ENCODE measurements at regions of chr16 and their contacts with region 1.

Region 1: DNA sequence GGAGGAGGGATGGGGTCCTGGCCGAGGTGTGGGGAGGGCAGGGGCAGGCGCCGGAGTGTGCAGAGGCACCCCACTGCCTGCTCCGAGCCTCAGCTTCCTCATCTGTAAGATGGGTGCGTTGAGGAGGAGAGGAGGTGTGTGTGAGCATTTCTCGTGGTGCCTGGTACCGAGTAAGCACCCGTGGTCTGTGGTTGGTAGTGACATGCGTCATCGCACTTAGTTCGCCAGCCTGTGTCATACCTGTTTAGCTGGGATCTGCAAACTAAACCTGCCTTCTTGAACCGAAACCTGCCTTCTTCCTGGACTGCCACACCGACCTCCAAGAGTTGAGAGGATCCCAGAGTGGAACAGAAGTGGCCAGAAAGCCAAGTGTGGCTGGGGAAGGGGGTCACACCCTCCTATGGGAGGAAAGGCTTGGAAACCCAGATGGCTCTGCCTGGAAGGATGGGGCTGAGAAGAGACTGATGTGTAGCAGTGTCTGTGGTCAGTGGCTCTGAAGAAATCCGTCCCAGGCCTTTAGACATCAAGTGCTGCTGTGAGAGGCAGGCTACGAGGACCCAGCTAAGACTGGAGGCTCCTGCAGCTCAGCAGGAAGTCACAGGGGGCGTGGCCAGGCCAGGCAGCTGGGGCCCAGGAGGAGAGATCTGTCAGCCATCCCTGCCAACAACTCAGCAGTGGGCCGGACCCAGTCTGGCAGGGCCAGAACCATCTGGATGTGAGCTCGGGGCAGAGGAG is 162.6 kb upstream of the PLCG2 start:
- DNase-seq: peak; percentile 76 to 90
- ATAC-seq: peak; percentile 86 to 89 (median 86)
- H3K4me3 ChIP-seq: no peak overlapping the region
- H3K4me3 Mint-ChIP-seq: peak overlapping the region; percentile 69
- H3K27ac ChIP-seq: peak overlapping the region; percentile 96
- H3K27ac Mint-ChIP-seq: no peak overlapping the region
- H3K4me1 ChIP-seq: peaks cover 22% of the 10 kb centered on the region
- H3K4me1 Mint-ChIP-seq: peaks cover 6 to 20% of the 10 kb centered on the region in 2 donors
- H3K27me3 ChIP-seq: no peaks in the 10 kb centered on the region
- H3K27me3 Mint-ChIP-seq: no peaks in the 10 kb centered on the region
- CTCF ChIP-seq: no peak

Region 2: GRCh38 chr16:81444448-81445121 is 171.9 kb before region 1 on chr16 and contains the start of gene CMIP:
- intact Hi-C with region 1: loop called (anchors 1 kb)
- DNase-seq: peak; percentile 90 to 91
- ATAC-seq: peak; percentile 67 to 89 (median 79)
- H3K4me3 ChIP-seq: peak within 1 kb of the TSS; percentile 74
- H3K4me3 Mint-ChIP-seq: peak within 1 kb of the TSS; percentile 93
- H3K27ac ChIP-seq: peak within 1 kb of the TSS; percentile 88
- H3K27ac Mint-ChIP-seq: peak within 1 kb of the TSS; percentile 91 to 93
- H3K4me1 ChIP-seq: peaks cover 48% of the 10 kb centered on the region
- H3K4me1 Mint-ChIP-seq: peaks cover 45 to 53% of the 10 kb centered on the region in 2 donors
- H3K27me3 ChIP-seq: no peaks in the 10 kb centered on the region
- H3K27me3 Mint-ChIP-seq: no peaks in the 10 kb centered on the region
- CTCF ChIP-seq: no peak
- total RNA-seq, gene CMIP: 88.2 to 115 (median 91.5) TPM

Region 3: GRCh38 chr16:81513204-81514040 is 103.1 kb before region 1 on chr16:
- intact Hi-C with region 1: no loop called
- DNase-seq: peak in 1 of 2 donors; percentile 16
- ATAC-seq: peak; percentile 41 to 72 (median 52)
- H3K4me3 ChIP-seq: no peak overlapping the region
- H3K4me3 Mint-ChIP-seq: peak overlapping the region; percentile 80
- H3K27ac ChIP-seq: peak overlapping the region; percentile 62
- H3K27ac Mint-ChIP-seq: peak overlapping the region; percentile 88 to 93
- H3K4me1 ChIP-seq: peaks cover 37% of the 10 kb centered on the region
- H3K4me1 Mint-ChIP-seq: peaks cover 28 to 46% of the 10 kb centered on the region in 2 donors
- H3K27me3 ChIP-seq: no peaks in the 10 kb centered on the region
- H3K27me3 Mint-ChIP-seq: no peaks in the 10 kb centered on the region
- CTCF ChIP-seq: no peak

Region 4: GRCh38 chr16:81576696-81577095 is 39.8 kb before region 1 on chr16:
- intact Hi-C with region 1: loop called (anchors 5 kb)
- DNase-seq: peak in 1 of 2 donors; percentile 63
- ATAC-seq: peak; percentile 78 to 84 (median 83)
- H3K4me3 ChIP-seq: no peak overlapping the region
- H3K4me3 Mint-ChIP-seq: no peak overlapping the region
- H3K27ac ChIP-seq: peak overlapping the region; percentile 87
- H3K27ac Mint-ChIP-seq: no peak overlapping the region
- H3K4me1 ChIP-seq: peaks cover 8% of the 10 kb centered on the region
- H3K4me1 Mint-ChIP-seq: peaks cover 13 to 14% of the 10 kb centered on the region in 2 donors
- H3K27me3 ChIP-seq: no peaks in the 10 kb centered on the region
- H3K27me3 Mint-ChIP-seq: no peaks in the 10 kb centered on the region
- CTCF ChIP-seq: no peak

Region 5: DNA sequence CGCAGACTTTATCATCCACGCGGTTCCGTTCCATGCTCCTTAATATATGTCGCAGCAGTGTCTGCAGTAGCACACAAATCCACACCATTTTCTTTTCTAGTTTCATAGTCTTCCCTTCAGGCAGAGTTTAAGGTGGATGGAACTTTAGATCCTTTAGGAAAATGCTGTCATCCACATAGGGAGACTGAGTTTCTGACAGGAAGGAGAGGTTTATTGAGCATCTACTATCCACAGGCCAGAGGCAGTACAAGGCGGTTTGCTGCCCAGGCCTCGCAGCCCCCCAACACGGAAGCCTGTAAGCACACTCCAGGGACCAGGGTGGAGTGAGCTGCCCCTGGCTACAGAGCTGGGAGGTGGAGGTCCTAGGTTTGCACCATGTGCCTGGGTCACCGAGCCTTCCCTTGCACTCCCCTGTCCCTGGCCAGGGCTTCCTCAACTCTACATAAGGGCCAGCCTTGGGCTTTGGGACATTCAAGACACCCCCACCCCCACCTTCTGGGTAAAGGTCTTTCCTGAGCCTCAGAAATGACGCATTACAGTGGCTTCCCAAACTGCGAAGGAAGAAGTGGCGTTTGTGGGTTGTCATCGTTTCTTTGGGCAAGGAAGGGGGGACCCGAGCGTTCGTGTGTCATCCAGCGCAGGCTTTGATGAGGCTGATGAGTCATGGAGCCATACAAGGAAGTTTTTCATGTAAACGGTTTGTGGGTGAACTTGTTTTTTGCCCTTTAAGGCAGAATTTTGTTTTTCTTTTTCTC is 16.1 kb after region 1 on chr16:
- intact Hi-C with region 1: loop called (anchors 1 kb)
- DNase-seq: peak; percentile 68 to 91
- ATAC-seq: peak; percentile 84 to 87 (median 84)
- H3K4me3 ChIP-seq: no peak overlapping the region
- H3K4me3 Mint-ChIP-seq: peak overlapping the region; percentile 49
- H3K27ac ChIP-seq: peak overlapping the region; percentile 73
- H3K27ac Mint-ChIP-seq: peak overlapping the region; percentile 87 to 88
- H3K4me1 ChIP-seq: peaks cover 35% of the 10 kb centered on the region
- H3K4me1 Mint-ChIP-seq: peaks cover 40 to 53% of the 10 kb centered on the region in 2 donors
- H3K27me3 ChIP-seq: no peaks in the 10 kb centered on the region
- H3K27me3 Mint-ChIP-seq: no peaks in the 10 kb centered on the region
- CTCF ChIP-seq: no peak

Region 6: GRCh38 chr16:81841722-81842121 is 225.2 kb after region 1 on chr16:
- intact Hi-C with region 1: loop called (anchors 5 kb)
- DNase-seq: peak; percentile 60 to 73
- ATAC-seq: peak; percentile 75 to 88 (median 87)
- H3K4me3 ChIP-seq: peak overlapping the region; percentile 34
- H3K4me3 Mint-ChIP-seq: peak overlapping the region; percentile 79
- H3K27ac ChIP-seq: peak overlapping the region; percentile 90
- H3K27ac Mint-ChIP-seq: peak overlapping the region; percentile 91 to 95
- H3K4me1 ChIP-seq: peaks cover 78% of the 10 kb centered on the region
- H3K4me1 Mint-ChIP-seq: peaks cover 64 to 72% of the 10 kb centered on the region in 2 donors
- H3K27me3 ChIP-seq: no peaks in the 10 kb centered on the region
- H3K27me3 Mint-ChIP-seq: no peaks in the 10 kb centered on the region
- CTCF ChIP-seq: no peak

Measured in natural killer cell (primary cell).